PC-9 (cell line): ENCODE measurements at regions of chr22 and their contacts with region 1.

Region 1: GRCh38 chr22:42614312-42615091 is at the start of gene POLDIP3:
- DNase-seq: peak; percentile 93 to 97
- H3K4me3 ChIP-seq: peak within 1 kb of the TSS; percentile 100
- H3K27ac ChIP-seq: peak within 1 kb of the TSS; percentile 96
- H3K4me1 ChIP-seq: peaks cover 30% of the 10 kb centered on the region
- H3K27me3 ChIP-seq: no peaks in the 10 kb centered on the region
- CTCF ChIP-seq: no peak
- total RNA-seq, gene POLDIP3: 60.1 and 62.9 TPM in 2 replicates

Region 2: GRCh38 chr22:42520663-42521546 is 93.6 kb before region 1 on chr22:
- CTCF ChIA-PET with region 1: no interaction called
- POLR2A ChIA-PET with region 1: interaction called, 10 read pairs
- intact Hi-C with region 1: no loop called
- DNase-seq: no peak
- H3K4me3 ChIP-seq: no peak overlapping the region
- H3K27ac ChIP-seq: no peak overlapping the region
- H3K4me1 ChIP-seq: peaks cover 7% of the 10 kb centered on the region; the same call in 1 of the 2 replicates
- H3K27me3 ChIP-seq: no peaks in the 10 kb centered on the region
- CTCF ChIP-seq: no peak

Region 3: GRCh38 chr22:42533638-42533977 is 80.9 kb before region 1 on chr22:
- CTCF ChIA-PET with region 1: no interaction called
- POLR2A ChIA-PET with region 1: no interaction called
- intact Hi-C with region 1: loop called (anchors 5 kb)
- DNase-seq: no peak
- H3K4me3 ChIP-seq: peak overlapping the region; percentile 57; the same call in 1 of the 2 replicates
- H3K27ac ChIP-seq: no peak overlapping the region
- H3K4me1 ChIP-seq: peaks cover 40% of the 10 kb centered on the region
- H3K27me3 ChIP-seq: no peaks in the 10 kb centered on the region
- CTCF ChIP-seq: no peak

Region 4: GRCh38 chr22:42635531-42635930 is 21.0 kb after region 1 on chr22:
- CTCF ChIA-PET with region 1: no interaction called
- POLR2A ChIA-PET with region 1: interaction called, 9 read pairs
- intact Hi-C with region 1: loop called (anchors 2 kb)
- DNase-seq: peak; percentile 82 to 85
- H3K4me3 ChIP-seq: no peak overlapping the region
- H3K27ac ChIP-seq: peak overlapping the region; percentile 90
- H3K4me1 ChIP-seq: peaks cover 19% of the 10 kb centered on the region
- H3K27me3 ChIP-seq: no peaks in the 10 kb centered on the region
- CTCF ChIP-seq: no peak